ENCODE measurements at regions of chr1 and their contacts with region 1.

Region 1: GRCh38 chr1:46132529-46133180 is at the start of gene PIK3R3:
- DNase-seq: peak; percentile 96 to 98 (median 97)
- H3K4me3 ChIP-seq: peak within 1 kb of the TSS; percentile 44 to 83 (median 74)
- H3K4me3 Mint-ChIP-seq: peak within 1 kb of the TSS; percentile 97 to 98
- H3K27ac ChIP-seq: peak within 1 kb of the TSS; percentile 84 to 88
- H3K27ac Mint-ChIP-seq: peak within 1 kb of the TSS; percentile 96 to 100 (median 99)
- H3K4me1 ChIP-seq: peaks cover 22 to 29% of the 10 kb centered on the region in 2 donors
- H3K4me1 Mint-ChIP-seq: peaks cover 31% of the 10 kb centered on the region
- H3K27me3 ChIP-seq: peaks cover 37 to 60% of the 10 kb centered on the region in 2 donors
- H3K27me3 Mint-ChIP-seq: peaks cover 43 to 60% (median 53%) of the 10 kb centered on the region in 3 donors
- CTCF ChIP-seq: no peak
- polyA plus RNA-seq, gene PIK3R3: 0.09 to 0.28 (median 0.17) TPM

Region 2: DNA sequence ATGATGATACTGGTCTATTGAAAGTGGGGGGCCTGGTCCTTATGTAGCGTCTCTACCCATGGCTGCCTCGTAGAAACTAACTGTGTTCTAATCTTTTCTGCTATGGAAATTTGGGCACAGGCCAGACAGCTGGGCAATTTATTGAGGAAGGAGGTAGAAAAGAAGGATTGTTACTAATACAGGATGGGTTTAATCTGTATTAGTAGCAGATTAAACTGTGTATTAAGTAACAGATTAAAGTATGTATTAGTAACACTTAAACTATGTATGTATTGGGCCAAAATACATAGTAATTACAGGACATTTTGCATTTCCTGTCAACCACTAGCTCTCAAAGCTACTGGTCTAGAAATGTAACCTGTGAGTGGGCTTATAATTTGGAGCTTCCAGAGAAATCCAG is 187.2 kb before region 1 on chr1:
- intact Hi-C with region 1: no loop called
- DNase-seq: no peak
- H3K4me3 ChIP-seq: no peak overlapping the region
- H3K4me3 Mint-ChIP-seq: no peak overlapping the region
- H3K27ac ChIP-seq: no peak overlapping the region
- H3K27ac Mint-ChIP-seq: no peak overlapping the region
- H3K4me1 ChIP-seq: no peaks in the 10 kb centered on the region
- H3K4me1 Mint-ChIP-seq: no peaks in the 10 kb centered on the region
- H3K27me3 ChIP-seq: no peaks in the 10 kb centered on the region
- H3K27me3 Mint-ChIP-seq: no peaks in the 10 kb centered on the region
- CTCF ChIP-seq: no peak

Region 3: GRCh38 chr1:46084553-46085451 is 47.9 kb before region 1 on chr1:
- intact Hi-C with region 1: no loop called
- DNase-seq: no peak
- H3K4me3 ChIP-seq: no peak overlapping the region
- H3K4me3 Mint-ChIP-seq: no peak overlapping the region
- H3K27ac ChIP-seq: no peak overlapping the region
- H3K27ac Mint-ChIP-seq: no peak overlapping the region
- H3K4me1 ChIP-seq: no peaks in the 10 kb centered on the region
- H3K4me1 Mint-ChIP-seq: peaks cover 3% of the 10 kb centered on the region
- H3K27me3 ChIP-seq: no peaks in the 10 kb centered on the region
- H3K27me3 Mint-ChIP-seq: no peaks in the 10 kb centered on the region
- CTCF ChIP-seq: no peak

Region 4: DNA sequence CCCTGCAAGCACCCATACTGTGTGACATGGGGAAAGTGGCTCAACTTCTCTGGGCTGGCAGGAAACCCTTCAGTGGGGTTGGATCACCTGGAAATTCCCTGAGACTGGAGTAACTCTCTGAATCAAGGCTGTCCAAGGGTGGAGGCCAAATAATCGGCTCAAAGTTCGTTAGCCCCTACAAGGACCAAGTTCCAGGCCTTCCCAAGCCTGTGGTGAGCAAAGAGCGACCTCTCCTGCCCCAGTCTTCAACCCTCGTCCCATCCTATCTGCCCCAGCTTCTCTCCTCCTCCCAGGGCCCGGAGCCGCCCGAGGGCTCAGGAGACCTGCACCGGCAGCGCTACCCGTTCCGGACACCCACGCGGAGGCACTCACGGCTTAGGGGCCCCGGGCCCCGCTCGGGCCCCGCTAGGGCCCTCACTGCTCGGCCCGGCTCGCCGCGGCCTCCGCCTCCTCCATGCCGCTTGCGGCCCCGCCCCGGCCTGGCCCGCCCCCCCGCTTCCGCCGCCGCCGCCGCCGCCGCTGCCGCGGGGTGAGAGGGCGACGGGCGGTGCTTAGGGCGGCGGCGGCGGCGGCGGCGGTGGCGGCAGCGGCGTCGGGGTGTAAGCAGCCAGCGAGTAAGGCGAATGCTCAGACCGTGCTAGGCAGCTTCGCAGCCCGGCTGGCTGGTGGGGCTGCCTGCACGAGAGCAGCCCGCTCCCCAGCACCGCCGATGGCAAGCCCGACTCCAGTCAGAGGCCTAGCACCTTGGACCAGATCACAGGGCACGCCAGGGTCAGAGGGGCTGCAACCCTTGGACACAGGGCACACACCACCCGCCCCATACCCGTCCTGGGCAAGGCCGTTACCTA is 65.5 kb after region 1 on chr1 and contains the start of gene POMGNT1:
- intact Hi-C with region 1: no loop called
- DNase-seq: peak; percentile 10 to 58 (median 55)
- H3K4me3 ChIP-seq: peak within 1 kb of the TSS; percentile 64 to 88 (median 66)
- H3K4me3 Mint-ChIP-seq: peak within 1 kb of the TSS; percentile 81 to 89
- H3K27ac ChIP-seq: peak within 1 kb of the TSS in 1 of 2 donors; percentile 71
- H3K27ac Mint-ChIP-seq: peak within 1 kb of the TSS in 6 of 7 donors; percentile 53 to 77 (median 64)
- H3K4me1 ChIP-seq: peaks cover 31 to 39% of the 10 kb centered on the region in 2 donors
- H3K4me1 Mint-ChIP-seq: peaks cover 44% of the 10 kb centered on the region
- H3K27me3 ChIP-seq: peaks cover 0 to 5% of the 10 kb centered on the region in 2 donors
- H3K27me3 Mint-ChIP-seq: peaks cover 5 to 12% (median 5%) of the 10 kb centered on the region in 3 donors
- CTCF ChIP-seq: no peak
- polyA plus RNA-seq, gene POMGNT1: 10.3 to 16.7 (median 12.2) TPM

Region 5: GRCh38 chr1:46370214-46370633 is 237.6 kb after region 1 on chr1:
- intact Hi-C with region 1: loop called in 1 of 2 experiments (anchors 5 kb)
- DNase-seq: peak; percentile 50 to 74 (median 63)
- H3K4me3 ChIP-seq: peak overlapping the region in 1 of 3 experiments; percentile 13
- H3K4me3 Mint-ChIP-seq: peak overlapping the region; percentile 33 to 59
- H3K27ac ChIP-seq: peak overlapping the region; percentile 32 to 67
- H3K27ac Mint-ChIP-seq: peak overlapping the region; percentile 79 to 95 (median 92)
- H3K4me1 ChIP-seq: peaks cover 61% of the 10 kb centered on the region in 2 donors
- H3K4me1 Mint-ChIP-seq: peaks cover 56% of the 10 kb centered on the region
- H3K27me3 ChIP-seq: no peaks in the 10 kb centered on the region
- H3K27me3 Mint-ChIP-seq: no peaks in the 10 kb centered on the region
- CTCF ChIP-seq: no peak